Esophagus muscularis mucosa (tissue), 4 donors: ENCODE measurements at regions of chr1 and their contacts with region 1.

Region 1: GRCh38 chr1:205335643-205336091 is 14.1 kb upstream of the NUAK2 start:
- DNase-seq: no peak
- H3K4me3 ChIP-seq: no peak overlapping the region
- H3K27ac ChIP-seq: no peak overlapping the region
- H3K4me1 ChIP-seq: no peaks in the 10 kb centered on the region
- H3K27me3 ChIP-seq: peaks cover 0 to 16% (median 0%) of the 10 kb centered on the region in 4 donors
- CTCF ChIP-seq: peak; percentile 80 to 88 (median 83)
- EP300 ChIP-seq: no peak
- POLR2A ChIP-seq: no peak

Region 2: DNA sequence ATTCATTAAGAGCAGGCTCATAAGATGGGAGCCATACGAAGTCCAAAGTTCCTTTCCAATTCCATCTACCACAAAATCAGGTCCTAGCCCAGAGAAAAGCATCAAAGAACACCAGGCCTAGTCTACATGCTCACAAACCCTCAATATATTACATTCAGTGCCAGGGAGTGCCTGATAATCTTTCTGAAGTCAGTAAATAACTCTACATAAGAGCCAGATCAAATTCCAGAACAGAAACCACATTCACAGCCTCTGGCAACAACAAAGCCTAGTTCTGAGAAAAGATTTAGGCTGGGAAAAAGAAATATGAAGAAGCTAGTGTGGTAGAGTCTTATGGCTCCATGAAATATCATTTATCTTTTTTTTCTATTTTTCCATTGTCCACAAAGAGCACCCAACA is 173.4 kb before region 1 on chr1:
- intact Hi-C with region 1: no loop called
- DNase-seq: no peak
- H3K4me3 ChIP-seq: no peak overlapping the region
- H3K27ac ChIP-seq: no peak overlapping the region
- H3K4me1 ChIP-seq: no peaks in the 10 kb centered on the region
- H3K27me3 ChIP-seq: no peaks in the 10 kb centered on the region
- CTCF ChIP-seq: no peak
- EP300 ChIP-seq: no peak
- POLR2A ChIP-seq: no peak

Region 3: GRCh38 chr1:205354259-205354904 is 18.7 kb after region 1 on chr1:
- intact Hi-C with region 1: no loop called
- DNase-seq: no peak
- H3K4me3 ChIP-seq: no peak overlapping the region
- H3K27ac ChIP-seq: no peak overlapping the region
- H3K4me1 ChIP-seq: peaks cover 0 to 13% (median 11%) of the 10 kb centered on the region in 4 donors
- H3K27me3 ChIP-seq: peaks cover 0 to 31% (median 0%) of the 10 kb centered on the region in 4 donors
- CTCF ChIP-seq: peak; percentile 82 to 90 (median 83)
- EP300 ChIP-seq: no peak
- POLR2A ChIP-seq: no peak

Region 4: GRCh38 chr1:205387845-205388244 is 52.2 kb after region 1 on chr1:
- intact Hi-C with region 1: loop called (anchors 5 kb)
- DNase-seq: no peak
- H3K4me3 ChIP-seq: no peak overlapping the region
- H3K27ac ChIP-seq: no peak overlapping the region
- H3K4me1 ChIP-seq: no peaks in the 10 kb centered on the region
- H3K27me3 ChIP-seq: peaks cover 0 to 15% (median 2%) of the 10 kb centered on the region in 4 donors
- CTCF ChIP-seq: no peak
- EP300 ChIP-seq: no peak
- POLR2A ChIP-seq: no peak